ENCODE measurements at regions of chr3 and their contacts with region 1.

Region 1: GRCh38 chr3:197203714-197204146 is 94.7 kb downstream of the DLG1 start:
- DNase-seq: no peak
- H3K4me3 ChIP-seq: no peak overlapping the region
- H3K27ac ChIP-seq: no peak overlapping the region; the same call in 1 of the 2 replicates
- H3K4me1 ChIP-seq: no peaks in the 10 kb centered on the region
- H3K27me3 ChIP-seq: no peaks in the 10 kb centered on the region
- CTCF ChIP-seq: no peak

Region 2: DNA sequence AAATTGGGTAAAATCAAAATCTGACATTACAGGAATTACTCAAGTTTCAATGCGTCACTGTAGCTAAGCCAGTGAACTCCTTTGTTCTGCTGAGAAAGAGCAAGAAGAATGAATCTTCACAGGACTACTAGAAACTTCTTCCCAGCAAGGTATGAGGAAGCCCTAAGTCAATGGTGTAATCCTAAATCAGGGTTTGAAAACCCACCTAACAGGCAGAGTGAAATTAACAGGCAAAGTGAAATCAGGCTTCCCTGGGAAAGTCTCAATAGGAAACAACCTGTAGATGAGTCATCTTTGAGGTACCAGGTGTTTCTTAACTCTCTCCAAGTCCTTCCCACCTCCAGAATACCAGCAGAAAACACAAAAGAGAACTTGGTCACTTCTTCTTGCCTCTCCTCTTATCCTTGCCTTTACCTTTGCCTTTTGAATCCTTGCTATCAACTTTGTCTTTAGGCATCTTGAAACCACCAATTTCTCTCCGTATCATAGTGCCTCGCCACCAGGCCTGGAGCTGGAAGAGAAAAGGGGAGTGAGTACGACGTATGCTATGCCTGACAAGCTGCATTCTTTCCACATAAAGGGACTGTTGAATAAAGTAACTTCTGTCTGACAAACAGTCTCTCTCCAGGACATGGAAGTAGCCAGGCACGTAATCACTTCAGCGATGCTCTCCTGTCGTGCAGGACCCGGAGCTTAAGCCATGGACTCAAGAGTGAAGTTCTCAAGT is 685.6 kb after region 1 on chr3:
- CTCF ChIA-PET with region 1: interaction called, 12 read pairs
- POLR2A ChIA-PET with region 1: no interaction called
- intact Hi-C with region 1: no loop called
- DNase-seq: peak; percentile 68 to 100
- H3K4me3 ChIP-seq: peak overlapping the region; percentile 47
- H3K27ac ChIP-seq: peak overlapping the region; percentile 99
- H3K4me1 ChIP-seq: peaks cover 29% of the 10 kb centered on the region
- H3K27me3 ChIP-seq: no peaks in the 10 kb centered on the region
- CTCF ChIP-seq: 0 out of 2 replicates have a peak, but pooled peaks have one; percentile 11